B cell (primary cell): ENCODE measurements at regions of chr16 and their contacts with region 1.

Region 1: GRCh38 chr16:57447186-57447962 is at the starts of genes CIAPIN1 and COQ9:
- DNase-seq: peak; percentile 94
- ATAC-seq: peak; percentile 98
- H3K4me3 ChIP-seq: peak within 1 kb of the TSS; percentile 67 to 96 (median 83)
- H3K4me3 Mint-ChIP-seq: peak within 1 kb of the TSS; percentile 94
- H3K27ac ChIP-seq: peak within 1 kb of the TSS; percentile 68 to 92
- H3K27ac Mint-ChIP-seq: peak within 1 kb of the TSS; percentile 91
- H3K4me1 ChIP-seq: peaks cover 16% of the 10 kb centered on the region in 2 donors
- H3K4me1 Mint-ChIP-seq: peaks cover 28% of the 10 kb centered on the region
- H3K27me3 ChIP-seq: no peaks in the 10 kb centered on the region
- H3K27me3 Mint-ChIP-seq: no peaks in the 10 kb centered on the region
- CTCF ChIP-seq: no peak
- total RNA-seq, gene CIAPIN1: 38.1 and 45.7 TPM in 2 replicates
- total RNA-seq, gene COQ9: 41.5 and 44.6 TPM in 2 replicates

Region 2: GRCh38 chr16:57244767-57245471 is 202.5 kb before region 1 on chr16 and contains the start of gene ARL2BP:
- CTCF ChIA-PET with region 1: no interaction called
- POLR2A ChIA-PET with region 1: interaction called, 4 read pairs
- intact Hi-C with region 1: loop called (anchors 1 kb)
- DNase-seq: peak; percentile 96
- ATAC-seq: peak; percentile 95
- H3K4me3 ChIP-seq: peak within 1 kb of the TSS; percentile 74 to 85 (median 79)
- H3K4me3 Mint-ChIP-seq: peak within 1 kb of the TSS; percentile 99
- H3K27ac ChIP-seq: peak within 1 kb of the TSS; percentile 79 to 92
- H3K27ac Mint-ChIP-seq: peak within 1 kb of the TSS; percentile 96
- H3K4me1 ChIP-seq: peaks cover 26 to 33% of the 10 kb centered on the region in 2 donors
- H3K4me1 Mint-ChIP-seq: peaks cover 34% of the 10 kb centered on the region
- H3K27me3 ChIP-seq: no peaks in the 10 kb centered on the region
- H3K27me3 Mint-ChIP-seq: no peaks in the 10 kb centered on the region
- CTCF ChIP-seq: no peak
- total RNA-seq, gene ARL2BP: 36.8 and 38.8 TPM in 2 replicates

Region 3: GRCh38 chr16:57422026-57422944 is 25.1 kb before region 1 on chr16:
- CTCF ChIA-PET with region 1: interaction called, 8 read pairs
- POLR2A ChIA-PET with region 1: no interaction called
- intact Hi-C with region 1: loop called (anchors 2 kb)
- DNase-seq: no peak
- ATAC-seq: no peak
- H3K4me3 ChIP-seq: no peak overlapping the region
- H3K4me3 Mint-ChIP-seq: no peak overlapping the region
- H3K27ac ChIP-seq: no peak overlapping the region
- H3K27ac Mint-ChIP-seq: no peak overlapping the region
- H3K4me1 ChIP-seq: peaks cover 10 to 13% of the 10 kb centered on the region in 2 donors
- H3K4me1 Mint-ChIP-seq: peaks cover 17% of the 10 kb centered on the region
- H3K27me3 ChIP-seq: no peaks in the 10 kb centered on the region
- H3K27me3 Mint-ChIP-seq: no peaks in the 10 kb centered on the region
- CTCF ChIP-seq: no peak

Region 4: GRCh38 chr16:57475711-57476339 is 28.5 kb after region 1 on chr16:
- CTCF ChIA-PET with region 1: no interaction called
- POLR2A ChIA-PET with region 1: interaction called, 17 read pairs
- intact Hi-C with region 1: no loop called
- DNase-seq: peak; percentile 78
- ATAC-seq: peak; percentile 93
- H3K4me3 ChIP-seq: no peak overlapping the region
- H3K4me3 Mint-ChIP-seq: peak overlapping the region; percentile 65
- H3K27ac ChIP-seq: no peak overlapping the region
- H3K27ac Mint-ChIP-seq: peak overlapping the region; percentile 7
- H3K4me1 ChIP-seq: peaks cover 33 to 48% of the 10 kb centered on the region in 2 donors
- H3K4me1 Mint-ChIP-seq: peaks cover 33% of the 10 kb centered on the region
- H3K27me3 ChIP-seq: peaks cover 0 to 13% (median 0%) of the 10 kb centered on the region in 4 experiments
- H3K27me3 Mint-ChIP-seq: peaks cover 9% of the 10 kb centered on the region
- CTCF ChIP-seq: peak; percentile 87

Region 5: GRCh38 chr16:57519796-57520360 is 72.5 kb after region 1 on chr16:
- CTCF ChIA-PET with region 1: interaction called, 14 read pairs
- POLR2A ChIA-PET with region 1: no interaction called
- intact Hi-C with region 1: no loop called
- DNase-seq: peak; percentile 83
- ATAC-seq: peak; percentile 76
- H3K4me3 ChIP-seq: no peak overlapping the region
- H3K4me3 Mint-ChIP-seq: no peak overlapping the region
- H3K27ac ChIP-seq: no peak overlapping the region
- H3K27ac Mint-ChIP-seq: no peak overlapping the region
- H3K4me1 ChIP-seq: peaks cover 26 to 39% of the 10 kb centered on the region in 2 donors
- H3K4me1 Mint-ChIP-seq: peaks cover 38% of the 10 kb centered on the region
- H3K27me3 ChIP-seq: no peaks in the 10 kb centered on the region
- H3K27me3 Mint-ChIP-seq: no peaks in the 10 kb centered on the region
- CTCF ChIP-seq: peak; percentile 98

Region 6: DNA sequence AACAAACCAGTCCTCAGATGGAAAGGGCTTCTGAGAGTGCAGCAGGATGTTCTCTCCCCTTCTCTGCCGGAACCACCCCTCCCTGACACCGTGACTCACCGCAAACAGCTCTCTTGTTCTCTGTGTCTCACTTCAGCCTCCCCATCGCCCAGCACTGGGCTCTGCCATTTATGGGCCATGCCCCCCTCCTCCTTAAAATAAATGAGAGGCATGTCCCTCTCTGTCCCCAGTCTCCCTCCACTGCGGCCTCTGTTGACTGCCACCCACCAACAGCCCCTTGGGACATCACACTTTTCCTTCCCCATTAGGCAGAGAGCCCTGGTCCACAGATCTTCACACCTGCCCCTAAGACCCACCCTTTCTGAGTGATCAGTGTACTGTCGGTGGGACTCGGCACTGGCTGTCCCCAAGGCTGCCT is 82.7 kb after region 1 on chr16:
- CTCF ChIA-PET with region 1: no interaction called
- POLR2A ChIA-PET with region 1: no interaction called
- intact Hi-C with region 1: no loop called
- DNase-seq: peak; percentile 75
- ATAC-seq: peak; percentile 72
- H3K4me3 ChIP-seq: peak overlapping the region in 4 of 5 experiments; percentile 4 to 20 (median 10)
- H3K4me3 Mint-ChIP-seq: peak overlapping the region; percentile 86
- H3K27ac ChIP-seq: peak overlapping the region; percentile 73 to 83
- H3K27ac Mint-ChIP-seq: peak overlapping the region; percentile 97
- H3K4me1 ChIP-seq: peaks cover 61 to 66% of the 10 kb centered on the region in 2 donors
- H3K4me1 Mint-ChIP-seq: peaks cover 68% of the 10 kb centered on the region
- H3K27me3 ChIP-seq: no peaks in the 10 kb centered on the region
- H3K27me3 Mint-ChIP-seq: no peaks in the 10 kb centered on the region
- CTCF ChIP-seq: no peak

Region 7: GRCh38 chr16:57734925-57735754 is 287.8 kb after region 1 on chr16:
- CTCF ChIA-PET with region 1: no interaction called
- POLR2A ChIA-PET with region 1: no interaction called
- intact Hi-C with region 1: loop called (anchors 1 kb)
- DNase-seq: peak; percentile 99
- ATAC-seq: peak; percentile 88
- H3K4me3 ChIP-seq: peak overlapping the region; percentile 65 to 98 (median 90)
- H3K4me3 Mint-ChIP-seq: peak overlapping the region; percentile 93
- H3K27ac ChIP-seq: peak overlapping the region; percentile 37 to 78
- H3K27ac Mint-ChIP-seq: peak overlapping the region; percentile 89
- H3K4me1 ChIP-seq: peaks cover 15 to 19% of the 10 kb centered on the region in 2 donors
- H3K4me1 Mint-ChIP-seq: peaks cover 34% of the 10 kb centered on the region
- H3K27me3 ChIP-seq: no peaks in the 10 kb centered on the region
- H3K27me3 Mint-ChIP-seq: no peaks in the 10 kb centered on the region
- CTCF ChIP-seq: no peak